Calu3 (cell line): ENCODE measurements at regions of chr4 and their contacts with region 1.

Region 1: DNA sequence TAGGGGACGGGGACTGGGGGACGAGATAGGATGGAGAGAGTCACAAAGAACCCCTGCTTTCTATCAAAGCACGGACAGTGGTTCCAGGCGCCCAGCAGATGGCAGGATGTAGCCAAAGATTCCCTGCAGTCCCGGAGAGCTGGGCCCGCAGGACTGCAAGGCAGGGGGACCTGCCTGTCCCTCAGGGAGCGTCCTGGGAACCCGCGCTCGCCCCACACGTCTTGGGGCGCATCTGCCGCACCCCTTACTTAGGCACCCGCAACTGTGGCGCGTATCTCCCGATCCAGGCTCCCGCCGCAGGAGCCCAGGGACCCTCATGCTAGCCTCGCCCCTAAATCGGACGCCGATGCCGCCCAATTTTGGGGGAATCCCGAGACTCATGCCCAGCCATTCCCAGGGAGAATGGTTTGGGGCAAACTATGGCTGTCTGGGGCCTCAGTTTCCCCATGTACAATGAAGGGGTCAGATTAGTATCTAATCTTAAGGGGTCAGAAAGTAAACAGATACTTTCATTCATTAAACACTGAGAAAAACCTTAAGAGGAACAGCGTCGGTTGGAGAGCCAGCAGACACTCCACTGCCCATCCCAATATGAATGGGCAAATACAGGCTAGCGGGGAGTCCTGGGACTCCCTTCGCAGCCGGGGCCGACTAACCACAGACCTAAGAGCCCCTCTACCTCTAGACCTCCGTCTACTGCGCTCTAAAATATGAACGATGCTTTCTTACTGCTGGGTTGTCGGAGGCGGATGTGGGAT is 581 bp upstream of the STK32B start:
- DNase-seq: peak; percentile 41
- H3K4me3 Mint-ChIP-seq: peak overlapping the region; percentile 41
- H3K27ac Mint-ChIP-seq: no peak overlapping the region
- H3K4me1 Mint-ChIP-seq: no peaks in the 10 kb centered on the region
- H3K27me3 Mint-ChIP-seq: no peaks in the 10 kb centered on the region
- CTCF ChIP-seq: no peak

Region 2: GRCh38 chr4:4995103-4995907 is 55.4 kb before region 1 on chr4:
- CTCF ChIA-PET with region 1: no interaction called
- intact Hi-C with region 1: no loop called
- DNase-seq: peak; percentile 51
- H3K4me3 Mint-ChIP-seq: no peak overlapping the region
- H3K27ac Mint-ChIP-seq: no peak overlapping the region
- H3K4me1 Mint-ChIP-seq: no peaks in the 10 kb centered on the region
- H3K27me3 Mint-ChIP-seq: no peaks in the 10 kb centered on the region
- CTCF ChIP-seq: peak; percentile 51

Region 3: DNA sequence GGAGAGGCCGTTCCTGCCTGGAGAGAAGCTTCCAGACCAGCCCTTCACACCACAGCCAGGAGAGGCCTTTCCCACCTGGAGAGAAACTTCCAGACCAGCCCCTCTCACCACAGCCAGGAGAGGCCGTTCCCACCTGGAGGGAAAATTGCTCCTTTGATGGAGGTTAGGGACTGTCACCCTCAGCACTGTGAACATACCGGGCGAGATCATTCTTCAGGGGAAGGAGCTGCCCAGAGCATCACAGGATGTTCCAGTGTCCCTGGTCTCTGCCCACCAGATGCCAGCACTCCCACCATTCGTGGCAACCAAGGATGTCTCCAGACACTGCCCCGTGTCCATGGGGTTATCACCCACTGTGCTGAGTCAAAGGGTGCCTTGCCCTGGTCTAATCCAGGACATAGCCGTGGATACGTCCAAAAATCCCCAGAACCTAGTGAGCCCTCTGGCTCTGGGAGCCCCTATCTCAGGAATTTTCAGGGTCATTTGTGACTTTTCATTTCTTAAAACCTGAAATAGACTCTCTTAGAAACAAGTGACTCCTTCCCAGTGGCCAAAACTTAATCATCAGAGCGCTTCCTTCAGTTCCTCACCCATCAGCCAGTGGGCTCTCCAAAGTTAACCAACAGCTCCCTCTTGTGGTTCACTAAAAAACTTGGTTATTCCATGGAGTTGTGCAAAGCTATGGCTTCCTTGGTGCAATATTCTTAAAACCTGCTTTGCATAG is 762.0 kb after region 1 on chr4:
- CTCF ChIA-PET with region 1: no interaction called
- intact Hi-C with region 1: loop called (anchors 10 kb)
- DNase-seq: peak; percentile 17
- H3K4me3 Mint-ChIP-seq: no peak overlapping the region
- H3K27ac Mint-ChIP-seq: no peak overlapping the region
- H3K4me1 Mint-ChIP-seq: no peaks in the 10 kb centered on the region
- H3K27me3 Mint-ChIP-seq: no peaks in the 10 kb centered on the region
- CTCF ChIP-seq: no peak